ENCODE measurements at regions of chr1 and their contacts with region 1.

Region 1: DNA sequence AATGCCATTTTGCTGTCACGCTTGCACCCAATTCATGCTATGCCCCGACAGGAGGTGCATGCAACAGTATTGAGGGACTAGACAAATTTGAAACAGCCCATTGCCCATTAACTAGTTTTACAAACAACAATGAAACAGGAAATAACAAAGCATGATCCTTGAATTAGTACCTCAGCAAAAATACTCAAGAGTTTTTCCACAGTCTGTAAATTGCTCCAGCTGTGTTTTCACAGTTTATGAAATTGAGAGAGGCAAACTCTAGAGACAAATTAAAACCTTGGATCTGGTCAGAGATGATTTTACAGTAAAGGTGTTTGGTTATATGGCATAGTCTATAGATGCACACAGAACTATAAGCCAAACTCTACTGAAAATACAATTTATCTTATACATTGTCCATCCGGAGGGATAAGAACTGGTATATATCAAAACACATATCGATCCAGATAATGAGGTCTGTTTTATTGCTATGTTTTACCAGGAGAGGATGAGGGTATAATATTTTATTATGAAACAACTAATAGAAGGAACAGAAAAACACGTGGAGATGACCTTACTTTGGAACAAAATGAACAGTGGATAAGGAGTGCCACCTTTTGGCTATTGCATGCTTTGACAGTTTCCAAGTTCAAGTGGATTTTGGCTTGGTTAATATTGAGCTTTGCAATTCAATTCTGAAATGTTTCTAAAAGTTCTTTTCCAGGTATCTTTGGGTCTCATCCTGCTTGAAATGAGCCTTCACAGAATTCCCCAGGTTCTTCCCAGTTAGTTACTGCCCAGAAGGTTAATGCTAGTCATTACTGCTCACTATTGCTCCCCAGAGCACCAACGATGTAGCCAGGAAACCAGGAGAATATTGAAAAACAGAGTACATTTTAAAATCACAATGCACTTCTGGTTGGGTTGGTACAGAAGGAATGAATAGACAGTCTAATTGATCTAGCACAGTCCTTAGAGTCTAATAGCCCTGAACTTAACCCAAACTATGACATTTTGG is 45.7 kb downstream of the ZC3H11B start:
- DNase-seq: no peak
- ATAC-seq: peak in 1 of 2 donors; percentile 38
- H3K4me3 ChIP-seq: no peak overlapping the region
- H3K27ac ChIP-seq: no peak overlapping the region
- H3K4me1 ChIP-seq: no peaks in the 10 kb centered on the region
- H3K27me3 ChIP-seq: no peaks in the 10 kb centered on the region

Region 2: DNA sequence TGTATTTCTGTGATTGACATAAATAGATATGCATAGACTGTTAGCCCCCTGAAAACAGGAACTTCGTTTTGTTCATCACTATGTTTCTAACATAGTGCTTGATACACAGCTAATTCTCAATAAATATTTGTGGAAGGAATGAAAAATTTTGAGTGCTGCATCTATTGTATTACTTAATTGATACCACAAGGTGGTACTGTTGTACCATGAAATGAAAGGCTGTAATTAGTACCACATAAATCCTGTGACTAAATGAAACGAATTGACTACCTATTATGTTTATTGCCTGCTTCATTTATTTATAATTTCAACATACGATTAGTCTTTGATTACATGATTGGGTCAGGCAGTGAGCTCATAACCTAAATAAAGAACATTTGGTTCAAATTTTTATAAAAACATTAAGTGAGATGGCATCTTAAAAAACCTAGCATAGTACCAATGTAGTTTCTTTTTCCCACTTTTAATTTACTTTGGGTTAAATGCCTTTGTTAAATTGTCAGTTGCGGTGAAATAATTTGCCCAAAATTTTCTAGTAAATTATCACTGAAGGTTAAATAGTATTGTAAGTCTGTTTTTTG is 1237.1 kb before region 1 on chr1:
- intact Hi-C with region 1: loop called in 1 of 4 experiments (anchors 10 kb)
- DNase-seq: no peak
- ATAC-seq: peak; percentile 29 to 53
- H3K4me3 ChIP-seq: no peak overlapping the region
- H3K27ac ChIP-seq: no peak overlapping the region
- H3K4me1 ChIP-seq: no peaks in the 10 kb centered on the region
- H3K27me3 ChIP-seq: no peaks in the 10 kb centered on the region

Region 3: GRCh38 chr1:219812491-219813203 is 245.4 kb after region 1 on chr1:
- intact Hi-C with region 1: loop called in 1 of 4 experiments (anchors 10 kb)
- DNase-seq: peak in 1 of 3 donors; percentile 18
- ATAC-seq: peak; percentile 73 to 78
- H3K4me3 ChIP-seq: no peak overlapping the region
- H3K27ac ChIP-seq: no peak overlapping the region
- H3K4me1 ChIP-seq: peaks cover 3% of the 10 kb centered on the region
- H3K27me3 ChIP-seq: no peaks in the 10 kb centered on the region

Measured in right cardiac atrium (tissue), 5 donors.